ENCODE measurements at regions of chr1 and their contacts with region 1.

Region 1: DNA sequence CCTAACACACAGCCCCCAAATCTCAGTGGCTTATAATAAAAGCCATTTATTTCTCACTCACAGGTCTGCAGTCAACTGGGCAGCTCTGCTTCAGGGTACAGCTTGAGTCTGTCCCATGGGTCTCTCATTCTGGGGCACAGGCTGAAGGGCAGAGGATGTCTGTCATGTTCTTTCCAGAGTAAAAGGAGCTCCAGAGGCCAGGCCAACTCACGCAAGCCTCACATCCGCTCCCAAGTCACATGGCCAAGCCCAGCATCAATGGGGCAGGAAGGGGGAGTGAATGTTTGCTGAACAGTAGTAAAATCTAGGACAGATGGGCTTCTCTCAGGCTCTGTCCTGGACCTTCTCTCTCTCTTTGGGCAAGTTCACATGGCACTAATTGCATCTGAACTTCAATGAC is 7.1 kb upstream of the SSBP3 start:
- DNase-seq: peak; percentile 32 to 63 (median 56)
- H3K4me3 ChIP-seq: no peak overlapping the region
- H3K27ac ChIP-seq: no peak overlapping the region
- H3K4me1 ChIP-seq: peaks cover 7% of the 10 kb centered on the region
- H3K27me3 ChIP-seq: no peaks in the 10 kb centered on the region
- CTCF ChIP-seq: no peak
- EP300 ChIP-seq: no peak
- POLR2A ChIP-seq: no peak

Region 2: GRCh38 chr1:54474639-54475251 is 61.5 kb after region 1 on chr1:
- intact Hi-C with region 1: loop called in 1 of 4 experiments (anchors 5 kb)
- DNase-seq: peak; percentile 67 to 77 (median 72)
- H3K4me3 ChIP-seq: peak overlapping the region; percentile 38
- H3K27ac ChIP-seq: peak overlapping the region; percentile 64 to 84
- H3K4me1 ChIP-seq: peaks cover 23% of the 10 kb centered on the region
- H3K27me3 ChIP-seq: no peaks in the 10 kb centered on the region
- CTCF ChIP-seq: no peak
- EP300 ChIP-seq: no peak
- POLR2A ChIP-seq: no peak

Region 3: GRCh38 chr1:54480525-54480848 is 67.2 kb after region 1 on chr1:
- intact Hi-C with region 1: loop called in 1 of 4 experiments (anchors 2 kb)
- DNase-seq: no peak
- H3K4me3 ChIP-seq: no peak overlapping the region
- H3K27ac ChIP-seq: peak overlapping the region in 1 of 2 donors; percentile 84
- H3K4me1 ChIP-seq: peaks cover 32% of the 10 kb centered on the region
- H3K27me3 ChIP-seq: no peaks in the 10 kb centered on the region
- CTCF ChIP-seq: no peak
- EP300 ChIP-seq: no peak
- POLR2A ChIP-seq: no peak

Region 4: GRCh38 chr1:54542120-54542961 is 129.0 kb after region 1 on chr1:
- intact Hi-C with region 1: no loop called
- DNase-seq: peak; percentile 61 to 87 (median 75)
- H3K4me3 ChIP-seq: peak overlapping the region; percentile 53
- H3K27ac ChIP-seq: peak overlapping the region; percentile 70 to 86
- H3K4me1 ChIP-seq: no peaks in the 10 kb centered on the region
- H3K27me3 ChIP-seq: no peaks in the 10 kb centered on the region
- CTCF ChIP-seq: no peak
- EP300 ChIP-seq: no peak
- POLR2A ChIP-seq: no peak

Measured in ovary (tissue), 10 donors.